ENCODE measurements at regions of chr17 and their contacts with region 1.

Region 1: DNA sequence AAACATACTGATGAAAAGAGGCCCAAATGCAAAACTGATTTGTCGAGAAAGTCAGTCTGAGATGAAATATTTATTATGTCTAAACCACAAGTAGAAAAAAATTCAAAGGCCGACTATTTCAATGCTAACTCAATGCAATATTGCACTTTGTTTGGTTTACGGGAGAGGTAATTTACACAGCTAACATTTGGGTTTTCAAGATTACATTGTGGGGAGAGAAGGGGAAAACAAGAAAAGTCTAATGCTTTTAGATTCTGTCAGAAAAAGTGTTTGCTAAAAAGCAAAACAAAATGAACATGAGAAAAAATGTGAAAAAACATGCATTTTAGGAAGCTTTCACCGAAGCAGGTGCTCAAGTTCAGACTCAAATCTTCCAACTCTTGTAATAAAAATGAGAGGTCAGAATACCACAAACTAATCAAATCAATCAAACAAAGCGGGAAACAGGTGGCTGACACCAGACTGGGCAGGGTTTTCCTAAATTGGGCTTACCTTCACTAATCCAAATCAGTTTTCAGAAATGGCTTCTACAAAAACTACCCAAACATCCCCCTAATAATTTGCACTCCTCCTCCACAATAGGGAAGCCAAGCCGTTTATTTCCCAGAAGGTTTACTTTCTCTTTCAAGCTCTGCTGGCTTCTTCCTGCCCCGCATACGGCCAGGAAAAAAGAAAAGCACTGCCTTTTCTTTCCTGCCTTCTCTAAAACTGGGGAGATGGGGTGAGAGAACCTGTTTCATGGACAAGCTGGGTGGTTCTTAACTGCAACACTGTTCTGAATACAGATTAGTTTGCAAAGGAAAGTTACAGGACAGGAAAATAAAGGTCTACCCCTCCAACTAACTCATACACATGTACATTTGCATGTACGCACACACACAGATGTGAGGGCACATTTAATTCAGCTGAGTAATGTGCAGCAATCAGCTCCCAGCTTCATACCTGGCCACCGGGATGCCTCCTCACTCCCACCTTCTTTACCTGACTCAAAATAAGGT is 9.3 kb downstream of the STAT3 start:
- DNase-seq: no peak
- CTCF ChIP-seq: no peak

Region 2: GRCh38 chr17:42337442-42337841 is 41.5 kb before region 1 on chr17:
- CTCF ChIA-PET with region 1: interaction called, 3 read pairs
- POLR2A ChIA-PET with region 1: interaction called, 13 read pairs
- DNase-seq: peak; percentile 78
- CTCF ChIP-seq: no peak

Measured in GM10248 (cell line).